ENCODE measurements at regions of chr11 and their contacts with region 1.

Region 1: GRCh38 chr11:118145285-118146227 is 7.1 kb downstream of the SCN4B start:
- DNase-seq: peak; percentile 95
- H3K4me3 Mint-ChIP-seq: peak overlapping the region; percentile 78
- H3K27ac Mint-ChIP-seq: no peak overlapping the region
- H3K4me1 Mint-ChIP-seq: peaks cover 3% of the 10 kb centered on the region
- H3K27me3 Mint-ChIP-seq: peaks cover 39% of the 10 kb centered on the region

Region 2: DNA sequence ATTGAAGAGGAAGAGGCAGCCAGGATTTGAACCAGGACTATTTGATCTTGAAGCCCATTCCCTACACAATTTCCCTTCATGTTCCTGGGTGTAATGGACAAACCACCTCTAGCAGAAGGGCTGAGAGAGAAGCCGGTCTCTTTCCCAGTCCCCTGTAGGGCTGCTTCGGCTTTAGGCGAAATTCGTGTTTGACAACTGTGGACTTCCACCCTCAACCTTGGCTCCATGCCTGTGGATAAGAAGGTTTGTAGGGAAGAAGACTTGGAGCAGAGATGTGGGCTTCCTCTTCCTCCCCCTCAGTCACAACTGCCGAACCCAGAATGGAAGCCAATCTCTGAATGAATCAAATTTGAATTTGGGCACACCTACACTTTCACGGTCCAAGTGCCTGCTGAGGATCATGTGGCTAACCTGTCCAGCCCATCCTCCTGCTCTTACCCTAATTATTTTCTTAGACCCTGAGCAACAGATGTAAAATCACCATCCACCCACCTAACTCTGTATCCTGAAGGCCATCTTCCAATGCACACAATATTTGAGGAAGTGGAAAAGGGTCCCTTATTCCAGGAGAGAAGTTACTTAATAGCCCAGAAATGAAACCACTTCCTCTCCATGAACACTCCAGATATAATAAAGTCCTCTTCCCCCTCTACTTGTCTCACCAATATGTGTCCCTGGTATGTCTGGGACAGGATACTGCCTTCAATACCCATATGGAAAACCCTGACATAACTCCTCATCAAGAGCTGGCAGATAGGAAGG is 41.0 kb after region 1 on chr11:
- CTCF ChIA-PET with region 1: no interaction called
- POLR2A ChIA-PET with region 1: no interaction called
- intact Hi-C with region 1: loop called (anchors 5 kb)
- DNase-seq: no peak
- H3K4me3 Mint-ChIP-seq: no peak overlapping the region
- H3K27ac Mint-ChIP-seq: no peak overlapping the region
- H3K4me1 Mint-ChIP-seq: no peaks in the 10 kb centered on the region
- H3K27me3 Mint-ChIP-seq: peaks cover 10% of the 10 kb centered on the region

Region 3: GRCh38 chr11:118338637-118339061 is 193.1 kb after region 1 on chr11:
- CTCF ChIA-PET with region 1: interaction called, 3 read pairs
- POLR2A ChIA-PET with region 1: no interaction called
- intact Hi-C with region 1: loop called (anchors 5 kb)
- DNase-seq: peak; percentile 95
- H3K4me3 Mint-ChIP-seq: peak overlapping the region; percentile 82
- H3K27ac Mint-ChIP-seq: peak overlapping the region; percentile 98
- H3K4me1 Mint-ChIP-seq: peaks cover 48% of the 10 kb centered on the region
- H3K27me3 Mint-ChIP-seq: no peaks in the 10 kb centered on the region

Region 4: DNA sequence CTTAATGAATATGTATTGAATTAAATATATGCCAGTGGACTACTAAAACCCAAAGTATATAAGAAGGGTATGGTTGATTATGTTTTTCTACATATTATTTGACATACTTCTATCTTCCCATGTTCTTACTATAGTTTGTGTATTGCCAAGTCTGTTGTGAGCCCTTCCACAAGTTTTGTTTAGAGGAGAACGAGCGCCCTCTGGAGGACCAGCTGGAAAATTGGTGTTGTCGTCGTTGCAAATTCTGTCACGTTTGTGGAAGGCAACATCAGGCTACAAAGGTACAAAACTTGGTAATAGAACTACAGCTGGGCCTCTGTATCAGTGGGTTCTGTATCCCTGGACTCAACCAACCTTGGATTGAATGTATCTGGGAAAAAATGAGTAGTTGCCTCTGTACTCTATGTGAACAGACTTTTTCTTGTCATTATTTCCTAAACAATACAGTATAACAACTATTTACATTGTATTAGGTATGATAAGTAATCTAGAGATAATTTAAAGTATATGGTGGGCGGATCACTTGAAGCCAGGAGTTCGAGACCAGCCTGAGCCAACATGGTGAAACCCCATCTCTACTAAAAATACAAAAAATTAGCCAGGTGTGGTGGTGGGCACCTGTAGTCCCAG is 343.0 kb after region 1 on chr11:
- CTCF ChIA-PET with region 1: interaction called, 5 read pairs
- POLR2A ChIA-PET with region 1: no interaction called
- intact Hi-C with region 1: loop called (anchors 5 kb)
- DNase-seq: peak; percentile 86
- H3K4me3 Mint-ChIP-seq: no peak overlapping the region
- H3K27ac Mint-ChIP-seq: no peak overlapping the region
- H3K4me1 Mint-ChIP-seq: peaks cover 5% of the 10 kb centered on the region
- H3K27me3 Mint-ChIP-seq: no peaks in the 10 kb centered on the region

Measured in activated CD4-positive, alpha-beta memory T cell treated with anti-CD3 and anti-CD28 coated beads for 36 hours (primary cell).